ENCODE measurements at regions of chr5 and their contacts with region 1.

Region 1: GRCh38 chr5:17691786-17692185 is 57.5 kb downstream of the TAF11L14 start:
- DNase-seq: no peak
- H3K4me3 ChIP-seq: no peak overlapping the region
- H3K27ac ChIP-seq: no peak overlapping the region
- H3K4me1 ChIP-seq: peaks cover 15% of the 10 kb centered on the region
- H3K27me3 ChIP-seq: peaks cover 16% of the 10 kb centered on the region
- CTCF ChIP-seq: no peak

Region 2: GRCh38 chr5:17398439-17398838 is 293.3 kb before region 1 on chr5:
- CTCF ChIA-PET with region 1: no interaction called
- POLR2A ChIA-PET with region 1: no interaction called
- intact Hi-C with region 1: no loop called
- DNase-seq: no peak
- H3K4me3 ChIP-seq: no peak overlapping the region
- H3K27ac ChIP-seq: no peak overlapping the region
- H3K4me1 ChIP-seq: peaks cover 18% of the 10 kb centered on the region; the same call in 1 of the 2 replicates
- H3K27me3 ChIP-seq: no peaks in the 10 kb centered on the region
- CTCF ChIP-seq: no peak

Region 3: GRCh38 chr5:17663182-17663581 is 28.6 kb before region 1 on chr5:
- CTCF ChIA-PET with region 1: interaction called, 10 read pairs
- POLR2A ChIA-PET with region 1: no interaction called
- intact Hi-C with region 1: no loop called
- DNase-seq: no peak
- H3K4me3 ChIP-seq: no peak overlapping the region
- H3K27ac ChIP-seq: no peak overlapping the region
- H3K4me1 ChIP-seq: no peaks in the 10 kb centered on the region
- H3K27me3 ChIP-seq: peaks cover 53% of the 10 kb centered on the region
- CTCF ChIP-seq: no peak

Region 4: DNA sequence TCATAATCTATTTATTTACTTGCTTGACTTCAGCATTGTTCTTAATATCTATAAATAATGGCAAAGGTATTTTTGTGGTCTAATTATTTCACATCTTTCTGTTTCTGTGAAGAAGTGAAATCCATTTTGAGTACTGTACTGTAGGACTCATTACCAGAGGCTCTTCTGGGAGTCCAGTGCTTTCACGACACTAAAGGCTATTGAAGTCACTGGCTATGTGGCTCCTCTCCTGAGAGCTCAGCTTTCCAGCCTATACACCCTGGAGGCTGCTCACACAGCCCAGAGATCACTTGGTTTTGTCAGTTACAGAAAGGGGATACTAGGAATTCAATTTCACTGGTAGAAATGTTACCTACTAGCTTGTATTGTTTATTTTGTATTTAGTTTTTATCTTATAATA is 489.8 kb after region 1 on chr5:
- CTCF ChIA-PET with region 1: no interaction called
- POLR2A ChIA-PET with region 1: no interaction called
- intact Hi-C with region 1: no loop called
- DNase-seq: no peak
- H3K4me3 ChIP-seq: no peak overlapping the region
- H3K27ac ChIP-seq: no peak overlapping the region
- H3K4me1 ChIP-seq: no peaks in the 10 kb centered on the region
- H3K27me3 ChIP-seq: no peaks in the 10 kb centered on the region
- CTCF ChIP-seq: no peak